ENCODE measurements at regions of chr5 and their contacts with region 1.

Region 1: DNA sequence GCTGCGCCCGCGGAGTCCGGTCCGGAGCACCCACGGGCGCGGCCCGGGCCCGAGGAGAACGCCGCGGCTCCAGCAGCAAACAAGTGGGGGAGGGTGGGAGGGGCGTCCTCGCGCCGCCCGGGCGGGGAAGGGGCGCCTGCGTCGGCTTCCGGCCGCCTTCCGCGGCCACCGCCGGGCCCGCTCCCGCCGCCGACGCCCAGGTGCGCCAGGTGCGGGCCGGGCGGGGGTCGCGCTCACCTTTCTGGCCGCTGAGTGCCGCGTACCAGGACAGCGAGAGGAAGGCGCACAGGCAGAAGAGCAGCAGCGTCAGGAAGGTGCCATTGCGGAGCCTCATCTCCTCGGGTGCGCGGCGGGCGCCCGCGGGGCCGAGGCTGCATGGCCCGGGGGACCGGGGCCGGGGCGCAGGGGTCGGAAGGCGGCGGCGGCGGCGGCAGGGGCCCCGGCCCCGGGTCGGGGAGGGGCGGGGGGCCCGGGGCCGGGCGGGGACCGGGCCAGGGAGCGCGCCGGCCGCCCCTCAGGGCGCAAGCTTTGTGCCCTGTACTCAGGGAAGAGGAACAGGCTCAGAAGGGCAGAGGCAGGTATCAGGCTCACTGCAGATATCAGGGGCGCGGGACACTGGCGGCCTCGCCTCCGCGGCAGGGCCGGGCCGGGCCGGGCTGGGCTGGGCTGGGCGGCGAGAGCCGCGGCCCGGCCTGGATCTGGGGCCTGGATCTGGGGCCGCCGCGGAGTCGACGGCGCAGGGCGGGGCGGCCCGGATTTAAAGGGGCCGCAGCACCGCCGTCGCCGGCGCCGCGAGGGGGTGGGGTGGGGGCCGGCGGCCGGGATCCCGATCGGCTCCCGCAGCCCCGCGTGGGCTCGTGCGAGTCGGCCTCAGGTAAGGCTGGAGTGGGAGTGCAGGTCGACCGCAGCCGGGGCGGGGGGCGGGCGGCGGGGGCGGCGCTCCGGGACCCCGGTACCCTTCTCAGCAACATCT is at the start of gene MGAT4B:
- H3K4me3 ChIP-seq: peak within 1 kb of the TSS; percentile 76
- H3K27ac ChIP-seq: peak within 1 kb of the TSS; percentile 89
- H3K4me1 ChIP-seq: peaks cover 22% of the 10 kb centered on the region
- CTCF ChIP-seq: no peak

Region 2: GRCh38 chr5:179643556-179643955 is 163.0 kb before region 1 on chr5:
- CTCF ChIA-PET with region 1: no interaction called
- POLR2A ChIA-PET with region 1: no interaction called
- H3K4me3 ChIP-seq: no peak overlapping the region
- H3K27ac ChIP-seq: no peak overlapping the region
- H3K4me1 ChIP-seq: no peaks in the 10 kb centered on the region
- CTCF ChIP-seq: no peak

Region 3: GRCh38 chr5:179678223-179679013 is 128.1 kb before region 1 on chr5:
- CTCF ChIA-PET with region 1: no interaction called
- POLR2A ChIA-PET with region 1: no interaction called
- H3K4me3 ChIP-seq: peak overlapping the region; percentile 82
- H3K27ac ChIP-seq: peak overlapping the region; percentile 83
- H3K4me1 ChIP-seq: no peaks in the 10 kb centered on the region
- CTCF ChIP-seq: peak; percentile 27

Region 4: DNA sequence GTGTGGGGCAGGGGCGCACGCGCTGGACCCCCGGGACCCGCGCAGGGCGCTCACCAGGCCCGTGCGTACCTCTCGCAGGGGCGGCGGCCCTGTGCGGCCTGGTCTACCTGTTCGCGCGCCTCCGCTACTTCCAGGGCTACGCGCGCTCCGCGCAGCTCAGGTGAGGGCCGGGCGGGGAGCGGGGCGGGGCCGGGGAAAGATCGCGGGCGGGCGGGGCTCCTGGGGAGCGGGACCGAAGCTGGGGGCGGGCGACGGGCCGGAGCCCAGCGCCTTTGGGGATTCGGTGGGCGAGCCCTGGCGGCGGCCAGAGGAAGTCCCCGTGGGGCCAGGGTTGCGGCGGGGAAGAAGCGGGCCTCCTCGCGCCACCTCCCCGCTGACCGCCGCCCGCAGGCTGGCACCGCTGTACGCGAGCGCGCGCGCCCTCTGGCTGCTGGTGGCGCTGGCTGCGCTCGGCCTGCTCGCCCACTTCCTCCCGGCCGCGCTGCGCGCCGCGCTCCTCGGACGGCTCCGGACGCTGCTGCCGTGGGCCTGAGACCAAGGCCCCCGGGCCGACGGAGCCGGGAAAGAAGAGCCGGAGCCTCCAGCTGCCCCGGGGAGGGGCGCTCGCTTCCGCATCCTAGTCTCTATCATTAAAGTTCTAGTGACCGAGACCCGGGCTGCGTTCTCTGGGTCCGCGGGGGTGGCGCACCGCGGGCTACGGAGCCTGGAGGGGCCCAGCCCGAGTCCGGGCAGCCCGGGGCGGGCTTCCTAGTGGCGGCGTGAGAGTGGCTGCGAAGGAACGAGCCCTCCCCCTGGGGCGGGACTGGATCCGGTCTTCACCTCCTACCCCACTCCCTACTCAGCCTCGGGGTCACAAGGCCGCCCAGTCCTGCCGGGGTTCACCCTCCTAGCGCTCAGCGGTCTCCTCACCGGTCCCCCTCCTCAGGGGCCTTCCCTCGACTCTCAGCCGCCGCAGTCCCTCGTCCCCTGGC is 10.4 kb before region 1 on chr5:
- CTCF ChIA-PET with region 1: interaction called, 4 read pairs
- POLR2A ChIA-PET with region 1: interaction called, 15 read pairs
- H3K4me3 ChIP-seq: peak overlapping the region; percentile 65
- H3K27ac ChIP-seq: peak overlapping the region; percentile 85
- H3K4me1 ChIP-seq: no peaks in the 10 kb centered on the region
- CTCF ChIP-seq: peak; percentile 70

Region 5: DNA sequence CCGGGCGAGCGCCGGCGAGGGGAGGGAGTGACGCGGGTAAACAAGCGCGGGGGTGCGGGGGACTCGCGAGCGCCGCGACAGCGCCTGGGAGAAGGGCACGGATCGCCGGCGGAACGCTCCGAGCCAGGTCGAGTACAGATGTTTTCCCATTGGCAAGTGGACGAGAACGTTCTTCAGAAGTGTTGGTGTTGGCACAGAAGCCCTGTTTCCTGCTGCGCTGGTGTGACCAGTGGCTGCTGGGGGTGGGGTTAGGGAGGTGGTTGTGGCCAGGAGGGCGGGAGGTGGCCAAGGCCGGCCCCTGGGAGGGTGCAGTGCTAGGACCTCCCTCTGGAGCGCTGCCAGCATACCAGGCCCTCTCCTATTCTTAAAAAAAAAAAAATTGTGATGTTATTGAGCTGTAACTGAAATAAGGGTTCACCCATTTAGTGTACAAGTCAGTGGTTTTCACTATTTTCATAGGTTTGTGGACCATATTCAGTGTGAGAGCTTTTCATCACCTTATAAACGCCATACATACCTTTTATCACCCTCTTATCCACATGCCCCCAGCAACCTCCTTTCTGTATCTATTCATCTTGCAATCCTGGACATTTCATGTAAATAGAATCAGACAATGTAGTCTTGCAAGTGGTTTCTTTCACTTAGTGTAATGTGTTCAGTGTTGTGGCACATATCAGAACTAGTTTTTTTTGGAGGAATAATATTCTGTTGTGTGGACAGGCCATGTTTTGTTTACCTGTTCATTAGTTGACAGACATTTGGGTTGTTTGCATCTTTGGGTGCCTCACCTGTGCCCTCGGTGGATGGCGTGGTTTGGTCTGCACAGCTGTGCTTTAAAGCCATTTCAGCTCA is 15.3 kb after region 1 on chr5:
- CTCF ChIA-PET with region 1: interaction called, 3 read pairs
- POLR2A ChIA-PET with region 1: interaction called, 28 read pairs
- H3K4me3 ChIP-seq: peak overlapping the region; percentile 83
- H3K27ac ChIP-seq: peak overlapping the region; percentile 92
- H3K4me1 ChIP-seq: peaks cover 19% of the 10 kb centered on the region
- CTCF ChIP-seq: peak; percentile 86; the same call in 1 of the 2 replicates